H1 (cell line): ENCODE measurements at regions of chr4 and their contacts with region 1.

Region 1: DNA sequence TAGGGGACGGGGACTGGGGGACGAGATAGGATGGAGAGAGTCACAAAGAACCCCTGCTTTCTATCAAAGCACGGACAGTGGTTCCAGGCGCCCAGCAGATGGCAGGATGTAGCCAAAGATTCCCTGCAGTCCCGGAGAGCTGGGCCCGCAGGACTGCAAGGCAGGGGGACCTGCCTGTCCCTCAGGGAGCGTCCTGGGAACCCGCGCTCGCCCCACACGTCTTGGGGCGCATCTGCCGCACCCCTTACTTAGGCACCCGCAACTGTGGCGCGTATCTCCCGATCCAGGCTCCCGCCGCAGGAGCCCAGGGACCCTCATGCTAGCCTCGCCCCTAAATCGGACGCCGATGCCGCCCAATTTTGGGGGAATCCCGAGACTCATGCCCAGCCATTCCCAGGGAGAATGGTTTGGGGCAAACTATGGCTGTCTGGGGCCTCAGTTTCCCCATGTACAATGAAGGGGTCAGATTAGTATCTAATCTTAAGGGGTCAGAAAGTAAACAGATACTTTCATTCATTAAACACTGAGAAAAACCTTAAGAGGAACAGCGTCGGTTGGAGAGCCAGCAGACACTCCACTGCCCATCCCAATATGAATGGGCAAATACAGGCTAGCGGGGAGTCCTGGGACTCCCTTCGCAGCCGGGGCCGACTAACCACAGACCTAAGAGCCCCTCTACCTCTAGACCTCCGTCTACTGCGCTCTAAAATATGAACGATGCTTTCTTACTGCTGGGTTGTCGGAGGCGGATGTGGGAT is 581 bp upstream of the STK32B start:
- DNase-seq: peak; percentile 53 to 82
- H3K4me3 ChIP-seq: peak overlapping the region; percentile 29 to 70 (median 58)
- H3K27ac ChIP-seq: no peak overlapping the region
- H3K4me1 ChIP-seq: peaks cover 0 to 7% (median 5%) of the 10 kb centered on the region in 4 experiments; a peak in 5 of 7 replicates
- H3K27me3 ChIP-seq: peaks cover 15 to 35% (median 24%) of the 10 kb centered on the region in 4 experiments
- CTCF ChIP-seq: peak; percentile 78 to 90 (median 85)
- EP300 ChIP-seq: no peak
- POLR2A ChIP-seq: no peak
- RAD21 ChIP-seq: peak; percentile 95 to 97

Region 2: GRCh38 chr4:5125321-5125720 is 74.6 kb after region 1 on chr4:
- CTCF ChIA-PET with region 1: interaction called, 15 read pairs
- POLR2A ChIA-PET with region 1: no interaction called
- DNase-seq: no peak
- H3K4me3 ChIP-seq: no peak overlapping the region
- H3K27ac ChIP-seq: no peak overlapping the region
- H3K4me1 ChIP-seq: peaks cover 0 to 2% (median 0%) of the 10 kb centered on the region in 4 experiments; a peak in 1 of 7 replicates
- H3K27me3 ChIP-seq: no peaks in the 10 kb centered on the region; a peak in 2 of 7 replicates
- CTCF ChIP-seq: no peak
- EP300 ChIP-seq: no peak
- POLR2A ChIP-seq: no peak
- RAD21 ChIP-seq: no peak

Region 3: DNA sequence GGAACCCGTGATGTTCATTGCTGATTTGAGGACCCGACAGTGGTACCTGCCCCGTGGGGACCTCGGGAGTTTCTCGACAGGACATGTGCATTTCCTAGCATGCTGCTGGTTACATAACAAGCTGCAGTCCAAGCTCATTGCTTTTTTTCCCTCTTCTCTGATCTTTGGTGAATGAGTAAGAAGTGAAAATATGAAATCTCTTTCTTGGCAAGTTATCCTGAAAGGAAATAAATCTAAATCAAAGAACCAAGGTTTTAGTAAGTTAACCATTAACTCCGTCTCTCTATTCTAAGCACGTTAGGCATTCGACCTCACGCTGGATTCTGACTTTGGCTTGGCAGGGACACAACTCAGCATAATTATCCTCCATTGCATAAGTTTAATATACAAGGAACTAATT is 87.2 kb after region 1 on chr4:
- CTCF ChIA-PET with region 1: interaction called, 16 read pairs
- POLR2A ChIA-PET with region 1: no interaction called
- DNase-seq: no peak
- H3K4me3 ChIP-seq: no peak overlapping the region
- H3K27ac ChIP-seq: no peak overlapping the region
- H3K4me1 ChIP-seq: peaks cover 0 to 15% (median 7%) of the 10 kb centered on the region in 4 experiments; a peak in 4 of 7 replicates
- H3K27me3 ChIP-seq: no peaks in the 10 kb centered on the region
- CTCF ChIP-seq: no peak
- EP300 ChIP-seq: no peak
- POLR2A ChIP-seq: no peak
- RAD21 ChIP-seq: no peak